Heart left ventricle (tissue), 16 donors: ENCODE measurements at regions of chr7 and their contacts with region 1.

Region 1: DNA sequence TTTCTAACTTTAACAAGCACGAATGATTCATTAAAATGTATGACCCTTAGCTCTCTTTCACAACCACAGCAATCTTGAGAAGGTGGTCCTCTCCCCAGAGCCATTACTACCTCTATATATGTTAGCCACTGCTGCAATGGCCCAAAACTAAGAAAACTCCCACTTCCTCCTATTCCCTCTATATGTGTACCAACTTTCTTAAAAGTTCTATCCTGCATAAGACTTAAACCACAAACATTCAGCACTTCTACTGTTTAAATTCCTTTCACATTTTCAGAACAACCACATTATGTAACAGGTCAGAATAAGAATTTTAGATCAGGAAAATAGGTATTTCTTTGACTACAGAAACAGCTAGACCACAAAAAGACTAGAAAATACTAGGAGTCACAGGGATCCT is 36.2 kb downstream of the WASL start:
- DNase-seq: no peak
- ATAC-seq: no peak
- H3K4me3 ChIP-seq: no peak overlapping the region
- H3K27ac ChIP-seq: no peak overlapping the region
- H3K4me1 ChIP-seq: peaks cover 0 to 56% (median 34%) of the 10 kb centered on the region in 12 donors
- H3K27me3 ChIP-seq: no peaks in the 10 kb centered on the region
- CTCF ChIP-seq: no peak
- POLR2A ChIP-seq: no peak

Region 2: GRCh38 chr7:123494193-123494796 is 218.3 kb before region 1 on chr7:
- intact Hi-C with region 1: loop called in 1 of 10 experiments (anchors 10 kb)
- DNase-seq: no peak
- ATAC-seq: no peak
- H3K4me3 ChIP-seq: no peak overlapping the region
- H3K27ac ChIP-seq: no peak overlapping the region
- H3K4me1 ChIP-seq: peaks cover 0 to 2% (median 0%) of the 10 kb centered on the region in 12 donors
- H3K27me3 ChIP-seq: peaks cover 0 to 4% (median 0%) of the 10 kb centered on the region in 9 donors
- CTCF ChIP-seq: peak; percentile 67 to 89 (median 80)
- POLR2A ChIP-seq: no peak

Region 3: DNA sequence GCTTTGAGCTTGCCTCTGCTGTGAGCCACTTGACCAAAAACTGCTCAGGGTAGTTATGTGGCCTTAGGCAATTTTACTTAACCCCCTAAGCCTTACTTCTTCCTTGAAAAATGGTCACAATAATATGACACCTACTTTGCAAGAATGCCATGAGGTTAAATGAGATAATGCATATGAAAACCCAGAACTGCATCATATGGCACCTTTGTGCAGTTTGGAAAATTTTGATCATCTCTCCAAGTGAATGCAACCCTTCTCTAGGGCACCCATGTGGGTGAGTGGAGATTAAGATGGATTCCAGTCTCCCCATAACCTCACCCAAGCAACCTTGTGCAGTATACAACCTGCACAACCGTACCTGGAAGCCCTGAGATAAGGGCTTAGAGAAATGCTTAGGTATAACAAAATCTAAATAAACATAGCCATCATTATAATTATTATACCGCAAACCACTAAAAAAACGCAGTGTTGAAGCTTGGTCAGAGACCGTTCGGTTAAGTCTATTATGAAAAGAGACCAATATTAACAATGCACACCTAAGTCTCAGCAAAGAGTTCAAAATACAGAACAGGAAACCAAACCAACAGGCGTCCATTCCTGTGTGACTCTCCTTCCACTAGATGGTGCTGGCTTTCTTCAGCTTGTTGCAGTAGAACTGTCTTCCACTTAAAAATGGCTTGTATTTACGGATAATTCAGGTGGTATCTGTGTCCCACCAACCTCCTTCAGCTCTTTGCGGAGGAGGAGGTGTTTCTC is 132.0 kb before region 1 on chr7:
- intact Hi-C with region 1: loop called in 1 of 10 experiments (anchors 5 kb)
- DNase-seq: no peak
- ATAC-seq: peak; percentile 65 to 84 (median 80)
- H3K4me3 ChIP-seq: no peak overlapping the region
- H3K27ac ChIP-seq: peak overlapping the region in 2 of 12 donors; percentile 2 to 17
- H3K4me1 ChIP-seq: no peaks in the 10 kb centered on the region
- H3K27me3 ChIP-seq: no peaks in the 10 kb centered on the region
- CTCF ChIP-seq: peak; percentile 38 to 74 (median 64)
- POLR2A ChIP-seq: no peak